ENCODE measurements at regions of chr1 and their contacts with region 1.

Region 1: DNA sequence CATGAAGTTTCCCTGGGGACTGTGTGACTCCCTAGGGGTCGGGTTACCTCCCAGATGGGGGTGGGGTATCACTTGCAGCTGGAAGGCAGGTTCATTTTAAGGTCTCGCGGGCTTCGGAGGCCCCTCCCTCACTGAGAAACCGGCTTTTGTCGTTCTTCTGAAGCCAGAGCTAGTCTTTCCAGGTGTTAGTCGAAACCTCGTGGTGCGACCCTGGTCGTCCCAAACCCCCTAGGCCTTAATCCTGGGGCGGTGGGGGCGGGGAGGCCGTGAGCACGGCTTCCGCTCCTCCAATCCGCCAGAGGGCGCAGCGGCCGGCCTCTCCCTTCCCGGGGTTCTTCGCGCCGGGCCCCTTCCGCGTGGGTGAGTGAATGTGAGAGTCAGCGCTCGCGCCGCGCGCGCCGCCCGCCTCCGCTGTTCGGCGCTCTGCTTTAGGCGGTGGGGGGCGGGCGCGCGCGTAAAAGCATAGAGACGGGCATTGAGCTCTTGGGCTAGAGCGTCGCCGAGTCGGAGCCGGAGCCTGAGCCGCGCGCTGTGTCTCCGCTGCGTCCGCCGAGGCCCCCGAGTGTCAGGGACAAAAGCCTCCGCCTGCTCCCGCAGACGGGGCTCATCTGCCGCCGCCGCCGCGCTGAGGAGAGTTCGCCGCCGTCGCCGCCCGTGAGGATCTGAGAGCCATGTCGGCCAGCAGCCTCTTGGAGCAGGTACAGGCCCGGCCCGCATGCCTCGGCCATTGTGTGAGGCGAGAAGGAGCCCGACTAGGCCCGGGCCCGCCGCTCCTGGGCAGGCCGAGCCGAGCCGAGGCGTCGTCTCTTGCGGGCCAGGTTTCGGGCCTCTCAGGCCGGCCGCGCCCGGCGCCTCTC is at the start of gene YTHDF2:
- DNase-seq: peak; percentile 95
- H3K4me3 ChIP-seq: peak within 1 kb of the TSS; percentile 82 to 95 (median 92)
- H3K27ac ChIP-seq: peak within 1 kb of the TSS; percentile 85
- H3K4me1 ChIP-seq: peaks cover 29% of the 10 kb centered on the region
- H3K27me3 ChIP-seq: no peaks in the 10 kb centered on the region
- CTCF ChIP-seq: peak; percentile 95
- POLR2A ChIP-seq: peak; percentile 61
- total RNA-seq, gene YTHDF2: 101 and 105 TPM in 2 replicates

Region 2: GRCh38 chr1:28642847-28643635 is 93.6 kb before region 1 on chr1 and contains the start of gene TAF12:
- CTCF ChIA-PET with region 1: interaction called, 14 read pairs
- POLR2A ChIA-PET with region 1: interaction called, 23 read pairs
- dilution Hi-C with region 1: no loop called
- intact Hi-C with region 1: loop called (anchors 1 kb)
- DNase-seq: peak; percentile 98
- H3K4me3 ChIP-seq: peak within 1 kb of the TSS; percentile 70 to 89 (median 82)
- H3K27ac ChIP-seq: peak within 1 kb of the TSS; percentile 91
- H3K4me1 ChIP-seq: peaks cover 20% of the 10 kb centered on the region
- H3K27me3 ChIP-seq: no peaks in the 10 kb centered on the region
- CTCF ChIP-seq: peak in 1 of 2 donors; percentile 48
- POLR2A ChIP-seq: peak; percentile 100
- total RNA-seq, gene TAF12: 15.3 and 18.2 TPM in 2 replicates

Region 3: DNA sequence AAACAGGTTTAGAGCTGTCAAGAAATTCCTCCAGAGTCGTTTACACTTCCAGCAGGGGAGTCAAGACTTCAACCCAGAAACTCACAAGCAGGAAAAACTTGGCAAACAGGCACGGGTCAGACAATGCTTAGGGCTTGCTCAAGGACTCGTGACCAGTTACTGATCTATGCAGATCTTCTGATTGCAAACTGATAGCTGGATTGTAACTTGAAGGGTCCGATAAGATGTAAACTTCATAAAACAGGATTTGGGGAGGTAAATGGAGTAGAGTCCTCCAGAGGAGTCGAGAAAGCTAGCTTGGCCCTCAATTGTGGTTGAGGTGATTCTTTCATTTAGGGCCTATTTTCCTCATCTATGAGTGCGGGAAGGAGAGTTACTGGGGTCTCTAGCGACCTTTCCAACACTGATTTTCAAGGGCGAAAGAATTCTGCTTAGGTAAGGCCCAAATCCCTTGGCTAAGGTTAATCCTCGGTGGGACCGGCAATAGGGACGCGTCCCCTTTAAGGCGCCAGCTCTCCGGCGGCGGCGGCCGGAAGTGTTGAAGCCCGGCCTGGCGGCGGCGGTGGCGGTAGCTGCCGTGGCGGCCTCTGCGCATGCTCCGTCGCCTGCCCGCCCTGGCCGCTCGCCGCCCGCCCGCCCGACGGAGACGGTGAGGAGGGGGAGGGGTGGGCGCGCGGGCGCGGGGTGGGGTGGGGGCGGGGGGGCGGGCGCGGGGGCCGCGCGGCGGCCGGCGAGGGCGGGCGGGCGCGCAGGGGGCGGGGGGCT is 68.3 kb before region 1 on chr1 and contains the start of gene GMEB1:
- CTCF ChIA-PET with region 1: interaction called, 6 read pairs
- POLR2A ChIA-PET with region 1: interaction called, 7 read pairs
- dilution Hi-C with region 1: no loop called
- intact Hi-C with region 1: loop called (anchors 1 kb)
- DNase-seq: peak; percentile 79
- H3K4me3 ChIP-seq: peak within 1 kb of the TSS; percentile 74 to 94 (median 89)
- H3K27ac ChIP-seq: peak within 1 kb of the TSS; percentile 90
- H3K4me1 ChIP-seq: peaks cover 12% of the 10 kb centered on the region
- H3K27me3 ChIP-seq: no peaks in the 10 kb centered on the region
- CTCF ChIP-seq: no peak
- POLR2A ChIP-seq: no peak
- total RNA-seq, gene GMEB1: 14.5 and 16.0 TPM in 2 replicates

Region 4: DNA sequence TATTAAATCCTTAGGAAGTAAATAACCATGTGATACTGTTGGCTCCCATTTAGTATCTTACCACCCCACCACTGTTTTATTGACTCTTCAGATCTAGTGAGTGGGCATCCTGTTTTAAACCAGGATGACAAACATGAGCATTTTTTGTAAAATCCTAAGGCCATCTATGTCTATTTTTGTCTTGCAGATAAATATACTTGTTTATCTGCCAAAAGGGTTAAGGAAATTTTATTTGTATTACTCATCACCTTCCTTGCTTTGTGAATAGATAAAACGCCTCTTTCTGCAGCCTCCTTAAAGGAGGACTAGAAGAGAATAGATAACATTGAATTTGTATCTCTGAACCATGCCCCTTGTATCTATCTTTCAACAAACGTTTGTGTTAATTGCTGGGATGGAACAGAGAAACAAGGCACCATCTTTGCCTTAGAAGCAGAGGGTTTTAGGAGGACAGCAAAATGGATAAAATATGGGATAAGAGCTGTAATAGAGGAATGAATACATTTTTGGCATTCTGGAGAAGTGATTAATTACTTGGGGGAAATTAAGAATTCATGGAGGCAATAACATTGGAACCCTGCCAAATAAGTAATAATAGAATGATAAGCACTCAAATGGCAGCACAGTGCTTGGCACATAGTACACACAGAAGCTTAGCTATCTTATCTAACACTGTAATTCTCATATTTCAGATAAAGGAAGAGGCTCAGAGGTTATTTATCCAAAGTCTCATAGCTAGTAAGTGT is 14.8 kb after region 1 on chr1:
- CTCF ChIA-PET with region 1: interaction called, 32 read pairs
- POLR2A ChIA-PET with region 1: interaction called, 8 read pairs
- dilution Hi-C with region 1: no loop called
- intact Hi-C with region 1: no loop called
- DNase-seq: peak; percentile 40
- H3K4me3 ChIP-seq: no peak overlapping the region
- H3K27ac ChIP-seq: no peak overlapping the region
- H3K4me1 ChIP-seq: peaks cover 36% of the 10 kb centered on the region
- H3K27me3 ChIP-seq: no peaks in the 10 kb centered on the region
- CTCF ChIP-seq: no peak
- POLR2A ChIP-seq: no peak

Region 5: DNA sequence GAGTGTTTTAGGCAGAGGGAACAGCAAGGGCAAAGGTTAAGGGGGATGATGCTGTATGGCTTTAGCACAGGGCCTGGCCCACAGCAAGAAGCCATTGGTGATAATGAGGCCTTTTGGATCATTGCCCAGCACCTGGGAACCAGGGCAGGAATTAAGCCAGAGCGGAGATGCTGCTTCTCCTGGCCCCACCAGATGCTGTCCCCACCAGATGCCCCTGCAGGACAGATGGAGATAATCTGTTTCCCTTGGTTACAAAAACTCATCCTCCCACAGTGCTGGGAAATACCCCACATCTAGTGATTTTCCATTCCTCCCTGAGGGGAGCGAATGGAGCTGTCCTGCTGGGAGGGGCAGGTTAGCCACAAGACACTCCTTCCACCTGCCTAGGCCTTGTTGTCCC is 94.1 kb after region 1 on chr1:
- CTCF ChIA-PET with region 1: no interaction called
- POLR2A ChIA-PET with region 1: no interaction called
- dilution Hi-C with region 1: no loop called
- intact Hi-C with region 1: no loop called
- DNase-seq: no peak
- H3K4me3 ChIP-seq: no peak overlapping the region
- H3K27ac ChIP-seq: no peak overlapping the region
- H3K4me1 ChIP-seq: no peaks in the 10 kb centered on the region
- H3K27me3 ChIP-seq: no peaks in the 10 kb centered on the region
- CTCF ChIP-seq: no peak
- POLR2A ChIP-seq: no peak

Measured in endothelial cell of umbilical vein (primary cell).